Heart right ventricle (tissue), 16 donors: ENCODE measurements at regions of chr10 and their contacts with region 1.

Region 1: DNA sequence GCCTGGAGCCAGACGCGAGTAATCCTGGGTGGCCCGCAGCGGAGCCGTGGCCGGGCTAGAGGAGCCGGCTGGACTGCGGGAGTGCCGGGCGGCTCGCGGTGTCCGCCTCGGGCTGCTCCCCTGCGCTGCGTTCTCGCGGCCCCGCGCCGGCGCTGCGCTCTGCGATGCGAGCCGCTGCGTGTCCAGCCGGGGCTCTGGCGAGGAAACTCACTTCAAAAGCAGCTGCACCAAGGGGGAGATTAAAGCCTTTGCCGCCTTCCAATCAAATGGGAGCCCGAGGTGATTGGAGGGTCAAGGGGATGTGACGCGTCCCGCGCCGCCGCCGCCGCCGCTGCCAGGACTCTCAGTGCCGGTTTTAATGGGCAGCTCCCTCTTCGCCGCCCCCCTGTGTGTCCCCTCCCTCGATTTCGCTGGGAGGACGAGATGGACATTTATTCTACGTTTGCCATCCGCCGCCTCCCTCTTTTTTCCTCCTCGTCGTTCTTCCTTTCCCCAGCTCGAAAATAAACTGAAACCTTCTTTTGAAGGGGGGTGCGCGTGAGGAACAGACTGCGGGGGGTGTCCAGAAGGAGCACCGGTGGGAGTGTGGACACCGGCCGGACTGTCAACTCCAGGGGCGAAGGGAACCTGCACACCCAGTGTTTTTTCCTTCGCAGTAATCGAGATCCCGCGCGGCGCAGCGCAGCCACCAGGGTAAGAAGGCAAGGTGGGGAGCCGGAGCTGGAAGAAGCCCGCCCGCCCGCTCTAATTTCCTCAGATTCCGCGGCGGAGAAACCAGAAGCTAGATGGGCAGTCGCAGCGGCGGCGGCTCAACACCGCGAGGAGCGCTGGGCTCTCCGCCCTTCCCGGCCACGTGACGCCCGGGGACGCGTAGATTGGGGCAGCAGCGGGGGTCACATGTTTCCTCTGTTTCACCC is at the start of gene ZNF503:
- DNase-seq: peak; percentile 95 to 97
- ATAC-seq: peak; percentile 78 to 93 (median 90)
- H3K4me3 ChIP-seq: peak within 1 kb of the TSS; percentile 85 to 98 (median 90)
- H3K27ac ChIP-seq: peak within 1 kb of the TSS; percentile 85 to 99 (median 94)
- H3K4me1 ChIP-seq: peaks cover 5 to 62% (median 44%) of the 10 kb centered on the region in 9 donors
- H3K27me3 ChIP-seq: peaks cover 0 to 64% (median 34%) of the 10 kb centered on the region in 7 donors
- CTCF ChIP-seq: peak in 5 of 9 donors; percentile 9 to 42 (median 29)
- total RNA-seq, gene ZNF503: 2.5 to 9.7 (median 4.1) TPM

Region 2: GRCh38 chr10:75261813-75262708 is 139.8 kb before region 1 on chr10:
- intact Hi-C with region 1: no loop called
- DNase-seq: no peak
- ATAC-seq: no peak
- H3K4me3 ChIP-seq: no peak overlapping the region
- H3K27ac ChIP-seq: no peak overlapping the region
- H3K4me1 ChIP-seq: peaks cover 0 to 6% (median 0%) of the 10 kb centered on the region in 9 donors
- H3K27me3 ChIP-seq: no peaks in the 10 kb centered on the region
- CTCF ChIP-seq: no peak

Region 3: GRCh38 chr10:75335983-75336382 is 65.8 kb before region 1 on chr10:
- intact Hi-C with region 1: no loop called
- DNase-seq: no peak
- ATAC-seq: no peak
- H3K4me3 ChIP-seq: no peak overlapping the region
- H3K27ac ChIP-seq: no peak overlapping the region
- H3K4me1 ChIP-seq: peaks cover 0 to 4% (median 0%) of the 10 kb centered on the region in 9 donors
- H3K27me3 ChIP-seq: peaks cover 0 to 5% (median 0%) of the 10 kb centered on the region in 7 donors
- CTCF ChIP-seq: no peak

Region 4: DNA sequence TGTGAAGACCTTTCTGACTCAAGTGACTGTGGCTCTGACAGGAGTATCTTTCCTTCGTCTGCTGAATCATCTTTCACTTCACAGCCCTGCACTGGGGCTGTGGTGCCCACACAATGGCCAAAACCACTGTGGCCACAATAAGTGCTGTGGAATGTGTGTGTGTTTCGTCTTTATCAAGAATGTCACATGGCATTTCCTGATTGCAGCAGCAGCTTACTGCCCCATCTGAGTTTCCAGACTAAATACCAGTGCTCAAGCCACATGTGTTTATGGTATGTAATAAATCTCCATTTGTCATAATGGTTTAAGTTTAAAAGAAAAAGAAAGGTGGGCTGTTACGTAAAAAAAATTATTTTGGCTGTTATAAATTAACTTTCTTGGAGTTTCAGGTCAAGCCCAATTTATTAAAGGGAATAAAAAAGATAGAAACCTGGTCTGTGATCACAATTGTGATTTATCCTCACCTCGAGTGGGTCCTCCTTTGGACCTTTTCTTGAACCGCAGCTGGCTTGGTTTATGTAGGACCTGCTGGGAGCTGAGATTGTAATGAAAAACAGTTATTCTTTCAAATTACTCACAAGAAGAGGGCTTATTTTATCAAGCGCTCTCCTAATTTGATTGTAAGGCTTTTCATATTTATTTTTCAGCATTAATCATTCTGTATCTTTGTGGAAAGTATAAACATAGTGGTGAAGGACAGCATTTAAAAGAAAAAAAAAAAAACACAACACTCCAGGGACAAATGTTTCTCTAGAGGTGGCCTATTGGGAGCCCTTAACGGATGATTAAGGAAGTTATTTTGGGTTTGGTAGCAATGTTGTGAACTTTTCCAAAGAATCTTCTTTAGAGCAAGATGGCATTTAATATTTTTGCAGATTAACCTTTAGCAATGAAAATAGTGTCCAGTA is 145.8 kb after region 1 on chr10:
- intact Hi-C with region 1: loop called in 2 of 10 experiments (anchors 5 to 10 kb)
- DNase-seq: no peak
- ATAC-seq: peak in 2 of 8 donors; percentile 42 to 57
- H3K4me3 ChIP-seq: no peak overlapping the region
- H3K27ac ChIP-seq: peak overlapping the region in 4 of 10 donors; percentile 32 to 47 (median 36)
- H3K4me1 ChIP-seq: peaks cover 0 to 50% (median 28%) of the 10 kb centered on the region in 9 donors
- H3K27me3 ChIP-seq: no peaks in the 10 kb centered on the region
- CTCF ChIP-seq: no peak

Region 5: GRCh38 chr10:75662715-75663114 is 260.9 kb after region 1 on chr10:
- intact Hi-C with region 1: loop called in 5 of 10 experiments (anchors 5 to 10 kb)
- DNase-seq: peak in 1 of 2 donors; percentile 44
- ATAC-seq: peak; percentile 84 to 93 (median 88)
- H3K4me3 ChIP-seq: no peak overlapping the region
- H3K27ac ChIP-seq: peak overlapping the region in 6 of 10 donors; percentile 13 to 74 (median 42)
- H3K4me1 ChIP-seq: peaks cover 0 to 37% (median 14%) of the 10 kb centered on the region in 9 donors
- H3K27me3 ChIP-seq: no peaks in the 10 kb centered on the region
- CTCF ChIP-seq: no peak

Region 6: GRCh38 chr10:75910032-75910431 is 508.2 kb after region 1 on chr10:
- intact Hi-C with region 1: loop called (anchors 2 to 10 kb)
- DNase-seq: no peak
- ATAC-seq: no peak
- H3K4me3 ChIP-seq: no peak overlapping the region
- H3K27ac ChIP-seq: no peak overlapping the region
- H3K4me1 ChIP-seq: peaks cover 0 to under 1% (median 0%) of the 10 kb centered on the region in 9 donors
- H3K27me3 ChIP-seq: no peaks in the 10 kb centered on the region
- CTCF ChIP-seq: peak; percentile 21 to 64 (median 59)

Region 7: GRCh38 chr10:76311752-76312636 is 910.2 kb after region 1 on chr10:
- intact Hi-C with region 1: loop called in 4 of 10 experiments (anchors 5 to 10 kb)
- DNase-seq: peak in 1 of 2 donors; percentile 27
- ATAC-seq: peak; percentile 64 to 85 (median 78)
- H3K4me3 ChIP-seq: no peak overlapping the region
- H3K27ac ChIP-seq: peak overlapping the region in 7 of 10 donors; percentile 7 to 68 (median 53)
- H3K4me1 ChIP-seq: peaks cover 0 to 47% (median 39%) of the 10 kb centered on the region in 9 donors
- H3K27me3 ChIP-seq: no peaks in the 10 kb centered on the region
- CTCF ChIP-seq: peak in 8 of 9 donors; percentile 21 to 47 (median 37)

Region 8: DNA sequence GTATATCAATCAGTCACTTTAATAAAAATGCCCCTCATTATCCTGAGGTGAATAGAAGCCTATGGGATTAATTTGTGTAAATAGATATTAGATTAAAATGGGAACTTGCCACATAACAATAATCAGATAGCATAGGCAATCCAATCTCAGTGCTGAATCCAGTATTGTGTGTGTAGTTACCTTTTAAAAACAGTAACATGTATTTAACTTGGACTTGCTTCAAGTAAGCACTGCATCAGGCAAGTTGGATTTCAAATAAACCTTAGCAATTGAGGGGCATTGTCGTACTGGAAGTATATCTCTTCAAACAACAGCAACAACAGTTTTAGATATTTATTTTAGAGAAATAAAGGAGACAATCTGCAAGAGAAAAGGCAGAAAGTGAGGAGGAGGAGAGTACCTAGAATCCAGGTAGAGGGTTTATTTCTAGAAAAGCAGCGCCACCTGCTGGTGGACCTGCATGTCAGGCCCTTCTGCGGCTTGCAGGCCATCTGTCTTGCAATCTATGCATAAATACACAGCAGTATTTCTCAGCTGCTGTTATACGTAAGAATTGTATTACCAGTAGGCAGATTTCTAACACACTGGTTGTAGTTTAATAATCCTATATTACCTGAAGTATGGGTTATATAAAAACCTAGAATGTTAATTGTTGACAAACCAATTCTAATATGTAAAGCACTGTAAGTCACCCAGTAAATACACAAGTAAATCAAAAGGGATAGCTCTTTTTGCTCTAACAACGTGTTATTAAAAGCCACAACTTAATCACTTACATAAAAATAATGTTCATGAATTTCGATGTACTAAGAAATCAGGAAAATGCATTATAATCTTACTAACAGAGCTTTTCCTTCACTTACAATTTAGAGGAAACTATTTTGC is 1583.0 kb after region 1 on chr10:
- intact Hi-C with region 1: loop called in 5 of 10 experiments (anchors 5 to 10 kb)
- DNase-seq: peak; percentile 47 to 58
- ATAC-seq: peak in 6 of 8 donors; percentile 57 to 87 (median 72)
- H3K4me3 ChIP-seq: no peak overlapping the region
- H3K27ac ChIP-seq: no peak overlapping the region
- H3K4me1 ChIP-seq: no peaks in the 10 kb centered on the region
- H3K27me3 ChIP-seq: peaks cover 0 to 8% (median 0%) of the 10 kb centered on the region in 7 donors
- CTCF ChIP-seq: peak; percentile 65 to 97 (median 95)